ENCODE measurements at regions of chr12 and their contacts with region 1.

Region 1: DNA sequence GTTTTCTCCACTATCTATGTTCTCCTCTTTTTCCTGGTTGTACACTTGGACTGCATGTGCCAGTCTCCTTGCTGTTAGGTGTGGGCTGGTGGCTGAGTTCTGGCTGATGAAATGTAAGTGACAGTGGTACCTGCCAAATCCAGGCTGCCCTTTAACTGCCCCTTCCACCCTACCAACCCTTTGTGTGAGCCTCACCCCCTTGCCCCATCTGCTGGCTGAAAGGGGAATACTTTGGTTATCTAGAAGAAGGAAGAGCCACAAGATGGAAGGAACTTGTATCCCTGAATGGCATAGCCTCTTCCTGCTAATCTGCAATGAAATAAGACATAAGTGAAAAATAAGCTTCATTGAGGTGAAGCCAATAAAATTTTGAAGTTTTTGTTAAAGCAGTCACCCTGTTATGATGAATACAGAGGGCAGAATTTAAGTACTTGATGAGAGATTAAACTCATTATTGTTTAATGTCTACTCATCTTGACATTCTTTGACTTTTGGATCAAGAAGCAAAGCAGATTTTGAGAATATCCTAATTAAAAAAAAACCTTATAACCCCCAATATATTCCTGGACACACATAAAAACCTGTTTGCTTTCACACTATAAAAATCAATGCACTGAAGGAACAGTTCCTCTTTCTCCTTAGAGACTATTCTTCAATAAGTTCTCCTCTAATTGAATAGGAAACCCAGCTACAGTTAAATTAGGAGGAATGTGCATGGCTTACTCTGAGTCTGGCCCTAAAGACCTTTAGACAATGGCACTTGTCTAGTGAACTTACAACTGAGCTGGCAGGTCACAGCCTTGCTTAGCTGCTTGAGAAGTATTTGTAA is 262.6 kb upstream of the BTG1 start:
- DNase-seq: peak in 3 of 5 donors; percentile 38 to 45 (median 45)
- H3K4me3 ChIP-seq: no peak overlapping the region
- H3K4me3 Mint-ChIP-seq: peak overlapping the region in 5 of 8 donors; percentile 2 to 80 (median 30)
- H3K27ac ChIP-seq: no peak overlapping the region
- H3K27ac Mint-ChIP-seq: peak overlapping the region in 6 of 7 donors; percentile 30 to 91 (median 77)
- H3K4me1 ChIP-seq: peaks cover 40% of the 10 kb centered on the region
- H3K4me1 Mint-ChIP-seq: peaks cover 38 to 73% (median 49%) of the 10 kb centered on the region in 4 donors
- H3K27me3 ChIP-seq: no peaks in the 10 kb centered on the region
- H3K27me3 Mint-ChIP-seq: no peaks in the 10 kb centered on the region

Region 2: GRCh38 chr12:91382081-91382543 is 1026.2 kb before region 1 on chr12:
- CTCF ChIA-PET with region 1: interaction called, 24 read pairs
- POLR2A ChIA-PET with region 1: no interaction called
- intact Hi-C with region 1: loop called (anchors 1 kb)
- DNase-seq: peak; percentile 72 to 79 (median 78)
- H3K4me3 ChIP-seq: no peak overlapping the region
- H3K4me3 Mint-ChIP-seq: peak overlapping the region; percentile 46 to 79 (median 63)
- H3K27ac ChIP-seq: no peak overlapping the region
- H3K27ac Mint-ChIP-seq: peak overlapping the region in 2 of 7 donors; percentile 23 to 31
- H3K4me1 ChIP-seq: peaks cover 7% of the 10 kb centered on the region
- H3K4me1 Mint-ChIP-seq: peaks cover 2 to 5% (median 5%) of the 10 kb centered on the region in 4 donors
- H3K27me3 ChIP-seq: no peaks in the 10 kb centered on the region
- H3K27me3 Mint-ChIP-seq: peaks cover 3 to 6% of the 10 kb centered on the region in 2 donors

Region 3: DNA sequence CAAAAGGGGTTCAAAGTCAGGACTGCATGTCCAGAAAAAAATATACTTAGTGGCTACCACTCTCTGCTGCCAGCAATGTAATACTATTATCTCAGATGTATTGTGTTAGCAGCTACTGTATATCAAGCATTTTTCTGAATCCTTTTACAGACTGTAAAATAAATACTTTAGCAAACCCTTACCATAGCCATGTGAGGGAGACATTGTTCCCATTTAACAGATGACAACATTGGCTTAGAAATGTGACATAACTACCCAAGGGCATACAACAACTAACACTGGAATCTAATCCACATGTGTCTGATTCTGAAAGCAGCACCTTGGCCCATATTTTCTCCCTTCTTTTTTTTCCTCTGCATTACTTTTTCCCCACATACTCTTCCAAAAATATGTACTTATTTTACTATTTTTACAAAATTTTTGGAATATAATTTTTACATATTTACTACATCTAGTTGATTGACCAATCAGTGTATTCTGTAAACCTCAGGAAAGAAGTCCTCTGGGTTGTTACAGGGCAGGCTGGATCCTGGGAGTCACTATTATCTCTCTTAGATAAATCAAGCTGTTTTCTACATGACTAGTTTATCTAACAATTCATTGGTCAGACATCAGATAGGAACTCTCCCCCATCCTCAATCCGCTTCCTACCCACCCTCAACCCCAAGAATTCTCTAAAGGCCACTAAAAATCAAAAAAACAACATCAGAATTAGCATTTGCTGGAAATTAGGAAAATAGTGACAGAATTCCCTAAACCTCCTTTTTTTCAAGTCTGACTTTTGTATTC is 416.7 kb before region 1 on chr12:
- CTCF ChIA-PET with region 1: interaction called, 4 read pairs
- POLR2A ChIA-PET with region 1: interaction called, 3 read pairs
- intact Hi-C with region 1: loop called (anchors 1 kb)
- DNase-seq: peak in 4 of 5 donors; percentile 51 to 67 (median 54)
- H3K4me3 ChIP-seq: no peak overlapping the region
- H3K4me3 Mint-ChIP-seq: no peak overlapping the region
- H3K27ac ChIP-seq: no peak overlapping the region
- H3K27ac Mint-ChIP-seq: peak overlapping the region in 5 of 7 donors; percentile 22 to 85 (median 70)
- H3K4me1 ChIP-seq: peaks cover 27% of the 10 kb centered on the region
- H3K4me1 Mint-ChIP-seq: peaks cover 18 to 37% (median 28%) of the 10 kb centered on the region in 4 donors
- H3K27me3 ChIP-seq: no peaks in the 10 kb centered on the region
- H3K27me3 Mint-ChIP-seq: no peaks in the 10 kb centered on the region

Region 4: GRCh38 chr12:92208613-92209121 is 199.6 kb before region 1 on chr12:
- CTCF ChIA-PET with region 1: interaction called, 14 read pairs
- POLR2A ChIA-PET with region 1: interaction called, 11 read pairs
- intact Hi-C with region 1: loop called (anchors 1 kb)
- DNase-seq: peak; percentile 61 to 78 (median 66)
- H3K4me3 ChIP-seq: peak overlapping the region in 1 of 2 donors; percentile 30
- H3K4me3 Mint-ChIP-seq: peak overlapping the region; percentile 63 to 88 (median 81)
- H3K27ac ChIP-seq: peak overlapping the region; percentile 19
- H3K27ac Mint-ChIP-seq: peak overlapping the region; percentile 77 to 95 (median 86)
- H3K4me1 ChIP-seq: peaks cover 31% of the 10 kb centered on the region
- H3K4me1 Mint-ChIP-seq: peaks cover 26 to 42% (median 35%) of the 10 kb centered on the region in 4 donors
- H3K27me3 ChIP-seq: no peaks in the 10 kb centered on the region
- H3K27me3 Mint-ChIP-seq: no peaks in the 10 kb centered on the region

Region 5: GRCh38 chr12:92363295-92364146 is 44.8 kb before region 1 on chr12:
- CTCF ChIA-PET with region 1: interaction called, 13 read pairs
- POLR2A ChIA-PET with region 1: interaction called, 31 read pairs
- intact Hi-C with region 1: loop called (anchors 1 kb)
- DNase-seq: peak; percentile 40 to 76 (median 49)
- H3K4me3 ChIP-seq: peak overlapping the region; percentile 14 to 34
- H3K4me3 Mint-ChIP-seq: peak overlapping the region; percentile 44 to 92 (median 78)
- H3K27ac ChIP-seq: peak overlapping the region; percentile 41
- H3K27ac Mint-ChIP-seq: peak overlapping the region; percentile 85 to 97 (median 94)
- H3K4me1 ChIP-seq: peaks cover 66% of the 10 kb centered on the region
- H3K4me1 Mint-ChIP-seq: peaks cover 42 to 75% (median 60%) of the 10 kb centered on the region in 4 donors
- H3K27me3 ChIP-seq: no peaks in the 10 kb centered on the region
- H3K27me3 Mint-ChIP-seq: no peaks in the 10 kb centered on the region

Region 6: DNA sequence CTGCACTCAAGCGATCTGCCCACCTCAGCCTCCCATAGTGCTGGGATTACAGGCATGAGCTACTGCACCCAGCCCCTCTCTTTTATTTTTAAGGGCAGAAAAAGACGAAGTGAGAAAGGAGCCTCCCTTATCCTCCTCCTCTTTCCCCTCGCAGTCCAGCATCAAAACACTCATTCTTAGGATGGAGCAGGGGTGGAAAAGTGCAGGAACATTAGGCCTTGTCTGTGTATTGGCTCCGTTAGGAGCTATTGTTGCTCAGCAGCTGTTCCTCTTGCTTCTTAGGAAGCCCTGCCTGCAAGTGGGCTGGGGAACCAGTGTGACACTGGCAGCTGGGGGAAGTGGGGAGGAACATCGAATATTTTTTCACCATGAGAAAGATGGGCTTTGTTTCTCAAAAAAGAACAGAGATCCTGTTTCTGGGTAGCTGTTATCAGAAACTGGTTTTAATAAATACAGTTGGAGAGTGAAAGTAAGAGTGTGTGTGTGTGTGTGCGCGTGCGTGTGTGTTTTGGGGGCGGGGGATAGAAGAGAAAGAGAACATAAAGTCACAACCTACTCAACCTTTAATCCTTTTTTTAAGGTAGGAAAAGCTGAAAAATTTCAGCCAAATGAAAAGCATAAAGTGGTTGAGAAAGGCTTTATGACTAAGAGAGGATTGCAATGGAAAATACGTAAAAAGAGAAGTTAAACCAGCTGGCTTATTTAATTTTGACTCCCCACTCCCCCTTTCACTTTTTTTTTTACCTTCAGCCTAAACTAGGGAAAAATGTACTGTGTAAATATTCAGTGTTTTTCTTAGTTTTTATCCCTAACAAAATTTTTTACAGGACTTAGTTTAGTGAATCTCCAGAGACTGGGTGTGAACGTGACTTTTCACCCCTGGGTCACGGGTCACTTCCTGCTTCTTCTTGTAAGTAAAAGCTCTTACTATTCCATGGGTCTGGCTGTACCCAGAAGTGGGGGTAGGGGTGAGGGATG is 97.3 kb after region 1 on chr12:
- CTCF ChIA-PET with region 1: interaction called, 5 read pairs
- POLR2A ChIA-PET with region 1: interaction called, 16 read pairs
- intact Hi-C with region 1: no loop called
- DNase-seq: peak; percentile 45 to 60 (median 56)
- H3K4me3 ChIP-seq: peak overlapping the region; percentile 28 to 30
- H3K4me3 Mint-ChIP-seq: peak overlapping the region; percentile 80 to 94 (median 91)
- H3K27ac ChIP-seq: peak overlapping the region; percentile 58
- H3K27ac Mint-ChIP-seq: peak overlapping the region; percentile 75 to 98 (median 94)
- H3K4me1 ChIP-seq: peaks cover 42% of the 10 kb centered on the region
- H3K4me1 Mint-ChIP-seq: peaks cover 24 to 37% (median 32%) of the 10 kb centered on the region in 4 donors
- H3K27me3 ChIP-seq: no peaks in the 10 kb centered on the region
- H3K27me3 Mint-ChIP-seq: no peaks in the 10 kb centered on the region

Region 7: DNA sequence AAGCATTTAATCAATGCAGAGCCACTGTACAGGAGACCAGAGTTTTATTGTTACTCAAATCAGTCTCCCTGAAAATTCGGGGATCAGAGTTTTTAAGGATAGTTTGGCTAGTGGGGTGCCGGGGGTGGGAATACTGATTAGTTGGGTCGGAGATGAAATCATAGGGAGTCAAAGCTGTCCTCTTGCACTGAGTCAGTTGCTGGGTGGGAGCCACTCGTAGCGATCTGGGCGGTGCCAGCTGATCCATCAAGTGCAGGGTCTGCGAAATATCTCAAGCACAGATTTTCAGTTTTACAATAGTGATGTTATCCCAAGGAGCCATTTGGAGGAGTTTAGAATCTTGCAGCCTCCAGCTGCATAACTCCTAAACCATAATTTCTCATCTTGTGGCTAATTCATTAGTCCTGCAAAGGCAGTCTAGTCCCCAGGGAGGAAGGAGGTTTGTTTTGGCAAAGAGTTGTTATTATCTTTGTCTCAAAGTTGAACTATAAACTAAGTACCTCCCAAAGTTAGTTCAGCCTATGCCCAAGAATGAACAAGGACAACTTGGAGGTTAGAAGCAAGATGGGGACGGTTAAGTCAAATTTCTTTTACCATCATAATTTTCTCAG is 125.1 kb after region 1 on chr12:
- CTCF ChIA-PET with region 1: no interaction called
- POLR2A ChIA-PET with region 1: no interaction called
- intact Hi-C with region 1: no loop called
- DNase-seq: no peak
- H3K4me3 ChIP-seq: no peak overlapping the region
- H3K4me3 Mint-ChIP-seq: no peak overlapping the region
- H3K27ac ChIP-seq: no peak overlapping the region
- H3K27ac Mint-ChIP-seq: no peak overlapping the region
- H3K4me1 ChIP-seq: peaks cover 12% of the 10 kb centered on the region
- H3K4me1 Mint-ChIP-seq: peaks cover 9 to 24% (median 15%) of the 10 kb centered on the region in 4 donors
- H3K27me3 ChIP-seq: no peaks in the 10 kb centered on the region
- H3K27me3 Mint-ChIP-seq: no peaks in the 10 kb centered on the region